IMR-90 (cell line): ENCODE measurements at regions of chr17 and their contacts with region 1.

Region 1: DNA sequence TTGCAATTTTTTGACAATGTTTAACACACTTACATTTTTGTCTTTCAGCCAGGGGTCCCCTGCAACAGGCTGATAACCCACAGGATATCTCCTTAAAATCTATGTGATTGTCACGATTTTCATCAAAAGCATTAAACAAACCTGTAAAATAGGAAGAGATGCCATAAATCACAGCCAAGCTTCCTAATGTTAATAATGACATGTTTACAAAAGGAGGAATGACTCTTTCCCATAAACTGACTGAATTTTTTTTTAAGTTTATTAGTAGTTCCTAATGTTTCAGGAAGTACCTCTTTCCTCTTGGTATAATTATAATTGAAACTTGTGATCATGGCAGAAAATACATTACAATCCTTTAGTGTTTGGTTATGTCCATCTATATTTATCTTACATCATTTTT is 119.6 kb downstream of the CA4 start:
- DNase-seq: no peak
- ATAC-seq: no peak
- H3K4me3 ChIP-seq: no peak overlapping the region
- H3K27ac ChIP-seq: no peak overlapping the region
- H3K4me1 ChIP-seq: no peaks in the 10 kb centered on the region
- H3K27me3 ChIP-seq: no peaks in the 10 kb centered on the region
- CTCF ChIP-seq: no peak
- POLR2A ChIP-seq: no peak
- RAD21 ChIP-seq: no peak

Region 2: GRCh38 chr17:60249290-60249826 is 20.1 kb before region 1 on chr17:
- CTCF ChIA-PET with region 1: interaction called, 3 read pairs
- POLR2A ChIA-PET with region 1: no interaction called
- dilution Hi-C with region 1: no loop called
- in situ Hi-C with region 1: no loop called
- intact Hi-C with region 1: loop called (anchors 1 kb)
- DNase-seq: peak; percentile 51
- ATAC-seq: peak; percentile 75
- H3K4me3 ChIP-seq: no peak overlapping the region
- H3K27ac ChIP-seq: peak overlapping the region; percentile 88; the same call in 1 of the 2 replicates
- H3K4me1 ChIP-seq: peaks cover 3% of the 10 kb centered on the region
- H3K27me3 ChIP-seq: no peaks in the 10 kb centered on the region
- CTCF ChIP-seq: no peak
- POLR2A ChIP-seq: no peak
- RAD21 ChIP-seq: no peak

Region 3: GRCh38 chr17:60383379-60383778 is 114.0 kb after region 1 on chr17:
- CTCF ChIA-PET with region 1: no interaction called
- POLR2A ChIA-PET with region 1: no interaction called
- dilution Hi-C with region 1: no loop called
- in situ Hi-C with region 1: no loop called
- intact Hi-C with region 1: no loop called
- DNase-seq: no peak
- ATAC-seq: no peak
- H3K4me3 ChIP-seq: no peak overlapping the region
- H3K27ac ChIP-seq: no peak overlapping the region
- H3K4me1 ChIP-seq: peaks cover 11% of the 10 kb centered on the region
- H3K27me3 ChIP-seq: no peaks in the 10 kb centered on the region
- CTCF ChIP-seq: no peak
- POLR2A ChIP-seq: no peak
- RAD21 ChIP-seq: no peak